ENCODE measurements at regions of chr9 and their contacts with region 1.

Region 1: GRCh38 chr9:136625101-136626060 is 37.3 kb upstream of the EGFL7 start:
- DNase-seq: peak; percentile 84
- H3K4me3 Mint-ChIP-seq: no peak overlapping the region
- H3K27ac Mint-ChIP-seq: peak overlapping the region; percentile 17
- H3K4me1 Mint-ChIP-seq: peaks cover 12% of the 10 kb centered on the region
- H3K27me3 Mint-ChIP-seq: no peaks in the 10 kb centered on the region
- CTCF ChIP-seq: peak; percentile 56

Region 2: GRCh38 chr9:136488247-136489214 is 136.8 kb before region 1 on chr9:
- CTCF ChIA-PET with region 1: interaction called, 280 read pairs
- POLR2A ChIA-PET with region 1: interaction called, 84 read pairs
- intact Hi-C with region 1: loop called (anchors 1 kb)
- DNase-seq: peak; percentile 71
- H3K4me3 Mint-ChIP-seq: no peak overlapping the region
- H3K27ac Mint-ChIP-seq: no peak overlapping the region
- H3K4me1 Mint-ChIP-seq: no peaks in the 10 kb centered on the region
- H3K27me3 Mint-ChIP-seq: no peaks in the 10 kb centered on the region
- CTCF ChIP-seq: peak; percentile 98

Region 3: GRCh38 chr9:136514022-136514714 is 111.2 kb before region 1 on chr9:
- CTCF ChIA-PET with region 1: no interaction called
- POLR2A ChIA-PET with region 1: no interaction called
- intact Hi-C with region 1: no loop called
- DNase-seq: no peak
- H3K4me3 Mint-ChIP-seq: no peak overlapping the region
- H3K27ac Mint-ChIP-seq: no peak overlapping the region
- H3K4me1 Mint-ChIP-seq: no peaks in the 10 kb centered on the region
- H3K27me3 Mint-ChIP-seq: no peaks in the 10 kb centered on the region
- CTCF ChIP-seq: no peak

Region 4: GRCh38 chr9:136545966-136546698 is 79.2 kb before region 1 on chr9 and contains the start of gene NOTCH1:
- CTCF ChIA-PET with region 1: interaction called, 27 read pairs
- POLR2A ChIA-PET with region 1: interaction called, 64 read pairs
- intact Hi-C with region 1: loop called (anchors 1 kb)
- DNase-seq: peak; percentile 94
- H3K4me3 Mint-ChIP-seq: peak within 1 kb of the TSS; percentile 76
- H3K27ac Mint-ChIP-seq: peak within 1 kb of the TSS; percentile 59
- H3K4me1 Mint-ChIP-seq: peaks cover 10% of the 10 kb centered on the region
- H3K27me3 Mint-ChIP-seq: no peaks in the 10 kb centered on the region
- CTCF ChIP-seq: no peak
- total RNA-seq, gene NOTCH1: 37.5 and 53.4 TPM in 2 replicates

Region 5: DNA sequence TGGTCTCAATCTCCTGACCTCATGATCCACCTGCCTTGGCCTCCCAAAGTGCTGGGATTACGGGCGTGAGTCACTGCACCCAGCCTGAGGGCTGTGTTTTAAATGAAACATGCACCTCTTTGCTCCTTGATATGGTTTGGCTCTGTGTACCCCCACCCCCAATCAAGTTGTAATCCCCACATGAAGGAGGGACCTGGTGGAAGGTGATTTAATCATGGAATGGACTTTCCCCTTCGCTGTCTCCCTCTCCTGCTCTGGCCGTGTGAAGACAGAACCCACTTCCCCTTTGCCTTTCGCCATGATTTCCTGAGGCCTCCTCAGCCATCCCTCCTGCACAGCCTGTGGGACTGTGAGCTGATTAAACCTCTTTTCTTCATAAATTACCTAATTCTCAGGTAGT is 67.0 kb before region 1 on chr9:
- CTCF ChIA-PET with region 1: interaction called, 7 read pairs
- POLR2A ChIA-PET with region 1: interaction called, 33 read pairs
- intact Hi-C with region 1: no loop called
- DNase-seq: peak; percentile 65
- H3K4me3 Mint-ChIP-seq: no peak overlapping the region
- H3K27ac Mint-ChIP-seq: peak overlapping the region; percentile 2
- H3K4me1 Mint-ChIP-seq: peaks cover 11% of the 10 kb centered on the region
- H3K27me3 Mint-ChIP-seq: no peaks in the 10 kb centered on the region
- CTCF ChIP-seq: no peak

Region 6: GRCh38 chr9:136694236-136694942 is 69.0 kb after region 1 on chr9:
- CTCF ChIA-PET with region 1: interaction called, 3 read pairs
- POLR2A ChIA-PET with region 1: interaction called, 11 read pairs
- intact Hi-C with region 1: no loop called
- DNase-seq: peak; percentile 62
- H3K4me3 Mint-ChIP-seq: no peak overlapping the region
- H3K27ac Mint-ChIP-seq: peak overlapping the region; percentile 70
- H3K4me1 Mint-ChIP-seq: peaks cover 24% of the 10 kb centered on the region
- H3K27me3 Mint-ChIP-seq: no peaks in the 10 kb centered on the region
- CTCF ChIP-seq: peak; percentile 79

Measured in MCF 10A (cell line).